ENCODE measurements at regions of chr2 and their contacts with region 1.

Region 1: GRCh38 chr2:100252811-100253698 is 69.2 kb downstream of the LONRF2 start:
- DNase-seq: no peak
- H3K4me3 ChIP-seq: no peak overlapping the region
- H3K4me1 ChIP-seq: no peaks in the 10 kb centered on the region
- H3K27me3 ChIP-seq: no peaks in the 10 kb centered on the region

Region 2: DNA sequence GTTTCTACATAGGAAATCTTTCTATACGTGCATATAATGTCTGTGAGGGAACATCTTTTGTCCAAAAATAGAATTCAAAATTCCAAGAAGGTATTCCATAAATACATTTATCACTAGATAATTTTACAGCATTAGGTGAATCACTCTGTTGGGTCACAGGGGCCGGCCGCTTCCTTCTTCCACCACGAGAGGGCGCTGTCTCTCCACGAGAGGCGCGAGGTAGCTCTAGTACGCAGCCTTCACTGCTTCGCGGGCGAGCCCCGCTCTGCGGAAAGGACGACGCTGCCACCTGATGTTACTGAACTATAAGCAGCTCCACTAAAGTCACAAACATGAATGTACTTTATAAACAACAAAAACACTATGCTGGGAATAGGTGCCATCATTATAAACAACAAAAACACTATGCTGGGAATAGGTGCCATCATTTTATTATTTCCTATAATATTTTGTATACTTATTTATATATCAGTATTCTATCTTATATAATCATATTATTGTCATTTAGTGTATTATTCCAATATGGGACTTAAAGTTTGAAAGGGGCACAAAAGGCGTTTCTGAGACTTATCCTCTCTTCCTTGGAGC is 693.9 kb before region 1 on chr2:
- in situ Hi-C with region 1: loop called (anchors 5 kb)
- DNase-seq: peak; percentile 59 to 91
- H3K4me3 ChIP-seq: no peak overlapping the region
- H3K4me1 ChIP-seq: peaks cover 3% of the 10 kb centered on the region; the same call in 1 of the 2 replicates
- H3K27me3 ChIP-seq: peaks cover 12% of the 10 kb centered on the region

Region 3: DNA sequence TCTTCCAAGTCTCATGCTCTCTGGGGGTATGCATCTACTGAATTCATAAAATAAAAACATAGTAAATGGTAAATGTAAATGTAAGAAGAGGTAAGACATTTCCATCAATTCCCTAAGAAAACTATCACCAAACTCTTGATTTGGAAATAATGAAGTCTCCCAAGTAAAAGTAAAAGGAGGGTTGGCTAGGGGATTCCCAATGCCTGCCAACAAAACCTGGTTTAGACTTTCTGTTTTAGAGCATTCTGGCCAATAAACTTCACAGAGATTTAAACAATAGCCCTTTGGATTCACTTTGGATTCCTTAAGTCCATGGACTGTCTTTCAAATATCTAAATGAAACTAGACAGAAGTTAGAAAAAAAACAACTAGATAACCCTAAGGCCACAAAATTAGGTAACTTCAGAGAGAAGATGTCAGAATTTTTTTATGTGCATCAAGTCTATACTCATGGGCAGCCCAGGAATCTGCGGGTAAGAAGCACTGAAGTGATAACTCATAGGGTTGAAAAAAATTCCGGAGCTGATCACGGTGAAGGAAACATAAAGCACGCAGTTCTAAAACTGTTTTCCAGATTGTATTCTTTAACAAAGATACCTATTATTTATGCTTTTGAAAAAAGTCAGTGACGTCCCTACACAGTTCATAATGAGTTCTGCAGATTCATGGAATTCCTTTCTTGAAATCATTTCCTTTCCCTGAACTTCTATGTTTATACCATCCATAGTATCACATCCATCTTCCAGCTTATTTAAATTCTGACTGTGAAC is 374.3 kb before region 1 on chr2:
- in situ Hi-C with region 1: no loop called
- DNase-seq: no peak
- H3K4me3 ChIP-seq: no peak overlapping the region
- H3K4me1 ChIP-seq: peaks cover 25% of the 10 kb centered on the region
- H3K27me3 ChIP-seq: no peaks in the 10 kb centered on the region

Region 4: GRCh38 chr2:100812116-100812515 is 559.1 kb after region 1 on chr2:
- in situ Hi-C with region 1: no loop called
- DNase-seq: no peak
- H3K4me3 ChIP-seq: no peak overlapping the region
- H3K4me1 ChIP-seq: no peaks in the 10 kb centered on the region
- H3K27me3 ChIP-seq: 0 out of 2 replicates have a peak, but pooled peaks cover 2% of the 10 kb centered on the region

Measured in HAP-1 (cell line).